A673 (cell line): ENCODE measurements at regions of chr7 and their contacts with region 1.

Region 1: GRCh38 chr7:88546808-88547207 is 212.7 kb upstream of the ZNF804B start:
- DNase-seq: peak; percentile 60
- H3K4me3 ChIP-seq: no peak overlapping the region
- H3K27ac ChIP-seq: no peak overlapping the region
- H3K4me1 ChIP-seq: no peaks in the 10 kb centered on the region
- H3K27me3 ChIP-seq: no peaks in the 10 kb centered on the region
- CTCF ChIP-seq: peak; percentile 52

Region 2: GRCh38 chr7:88628363-88629085 is 81.7 kb after region 1 on chr7:
- CTCF ChIA-PET with region 1: no interaction called
- POLR2A ChIA-PET with region 1: no interaction called
- intact Hi-C with region 1: no loop called
- DNase-seq: no peak
- H3K4me3 ChIP-seq: no peak overlapping the region
- H3K27ac ChIP-seq: no peak overlapping the region
- H3K4me1 ChIP-seq: no peaks in the 10 kb centered on the region
- H3K27me3 ChIP-seq: no peaks in the 10 kb centered on the region
- CTCF ChIP-seq: no peak

Region 3: GRCh38 chr7:88789480-88790064 is 242.8 kb after region 1 on chr7:
- CTCF ChIA-PET with region 1: interaction called, 10 read pairs
- POLR2A ChIA-PET with region 1: no interaction called
- intact Hi-C with region 1: no loop called
- DNase-seq: peak; percentile 37
- H3K4me3 ChIP-seq: no peak overlapping the region
- H3K27ac ChIP-seq: no peak overlapping the region
- H3K4me1 ChIP-seq: no peaks in the 10 kb centered on the region
- H3K27me3 ChIP-seq: peaks cover 2% of the 10 kb centered on the region
- CTCF ChIP-seq: peak; percentile 68

Region 4: DNA sequence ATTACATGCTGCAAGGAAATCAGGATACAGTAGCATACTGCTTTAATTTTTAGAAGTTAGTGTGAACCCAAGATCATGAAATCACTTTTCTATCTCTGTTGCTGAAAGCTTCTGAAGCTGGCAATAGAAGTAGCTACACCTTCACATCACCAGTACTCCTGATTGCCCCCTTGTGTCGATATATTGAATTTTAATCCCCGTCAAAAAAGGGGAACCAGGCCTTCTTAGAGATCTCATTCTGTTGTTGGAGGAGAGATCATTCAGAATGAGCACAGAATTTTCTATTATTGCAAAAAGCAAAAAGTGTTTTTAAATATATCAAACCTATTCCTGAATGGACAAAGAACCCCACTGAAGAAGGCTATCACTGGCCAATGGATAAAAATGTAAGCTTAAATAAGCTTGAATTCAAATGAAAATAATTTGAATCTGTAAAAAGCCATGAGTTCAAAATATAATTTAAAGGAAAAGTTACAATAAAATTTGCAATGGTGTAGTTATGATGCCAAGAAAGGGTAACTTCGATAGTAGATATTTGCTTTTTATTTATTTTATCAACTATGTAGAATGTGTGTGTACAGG is 288.4 kb after region 1 on chr7:
- CTCF ChIA-PET with region 1: no interaction called
- POLR2A ChIA-PET with region 1: no interaction called
- intact Hi-C with region 1: loop called (anchors 5 kb)
- DNase-seq: peak; percentile 55
- H3K4me3 ChIP-seq: no peak overlapping the region
- H3K27ac ChIP-seq: no peak overlapping the region
- H3K4me1 ChIP-seq: no peaks in the 10 kb centered on the region
- H3K27me3 ChIP-seq: no peaks in the 10 kb centered on the region
- CTCF ChIP-seq: peak; percentile 61

Region 5: GRCh38 chr7:89622838-89623672 is 1076.2 kb after region 1 on chr7:
- CTCF ChIA-PET with region 1: no interaction called
- POLR2A ChIA-PET with region 1: no interaction called
- intact Hi-C with region 1: loop called (anchors 5 kb)
- DNase-seq: peak; percentile 58
- H3K4me3 ChIP-seq: no peak overlapping the region
- H3K27ac ChIP-seq: no peak overlapping the region
- H3K4me1 ChIP-seq: no peaks in the 10 kb centered on the region
- H3K27me3 ChIP-seq: peaks cover 10% of the 10 kb centered on the region
- CTCF ChIP-seq: peak; percentile 81

Region 6: DNA sequence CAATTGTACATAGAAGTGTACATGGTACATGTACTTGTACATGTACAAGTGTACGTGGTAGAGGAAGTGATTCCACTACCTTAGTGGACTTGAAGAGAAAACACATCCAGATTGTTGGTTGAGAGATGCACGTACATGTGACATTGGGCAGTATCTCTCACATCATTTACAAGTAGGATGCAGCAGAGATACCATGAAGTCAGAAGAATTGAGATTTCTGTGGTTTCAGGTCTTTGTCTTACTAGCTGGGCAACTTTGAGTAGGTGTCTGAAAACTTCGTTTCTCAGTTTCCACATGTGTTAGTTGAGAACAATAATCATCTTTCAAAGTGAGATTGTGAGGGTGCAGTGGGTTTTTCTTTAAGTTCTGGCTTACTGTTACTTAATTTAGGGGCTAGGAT is 1877.9 kb after region 1 on chr7:
- CTCF ChIA-PET with region 1: no interaction called
- POLR2A ChIA-PET with region 1: no interaction called
- intact Hi-C with region 1: loop called (anchors 5 kb)
- DNase-seq: no peak
- H3K4me3 ChIP-seq: no peak overlapping the region
- H3K27ac ChIP-seq: no peak overlapping the region
- H3K4me1 ChIP-seq: peaks cover 9% of the 10 kb centered on the region
- H3K27me3 ChIP-seq: no peaks in the 10 kb centered on the region
- CTCF ChIP-seq: no peak